ENCODE measurements at regions of chr11 and their contacts with region 1.

Region 1: DNA sequence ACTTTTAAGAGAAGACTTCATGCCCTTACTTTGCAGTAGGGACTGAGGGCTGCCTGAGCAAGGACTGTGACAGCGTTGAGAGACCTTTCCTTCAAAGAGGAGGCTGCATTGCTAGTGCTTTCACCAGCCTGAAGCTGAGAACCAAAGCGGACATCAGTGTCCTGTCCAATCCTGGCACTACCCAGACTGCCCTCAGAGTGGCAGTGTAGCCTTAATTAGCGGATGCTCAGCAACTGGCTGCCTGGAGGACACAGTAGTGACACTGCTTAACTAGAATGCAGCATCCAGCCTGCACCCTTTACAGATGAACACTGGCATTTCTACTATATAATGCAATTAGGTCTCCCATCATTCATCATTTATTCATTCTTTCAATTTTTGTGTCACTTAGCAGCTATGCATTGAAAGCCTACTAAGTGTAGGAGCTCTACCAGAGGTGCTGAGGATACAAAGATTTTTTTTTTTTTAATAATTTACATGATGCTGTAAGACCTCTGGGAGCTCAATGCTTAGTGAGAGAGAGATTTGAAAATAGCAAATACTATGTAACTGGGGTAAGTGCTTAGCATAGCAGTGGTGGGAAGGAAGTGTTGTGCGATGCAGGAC is 36.9 kb upstream of the SLC36A4 start:
- DNase-seq: peak; percentile 76
- ATAC-seq: peak; percentile 100
- H3K4me3 ChIP-seq: no peak overlapping the region
- H3K27ac ChIP-seq: no peak overlapping the region
- H3K4me1 ChIP-seq: no peaks in the 10 kb centered on the region
- H3K27me3 ChIP-seq: peaks cover 16% of the 10 kb centered on the region
- CTCF ChIP-seq: peak; percentile 97
- POLR2A ChIP-seq: no peak
- RAD21 ChIP-seq: peak; percentile 99

Region 2: DNA sequence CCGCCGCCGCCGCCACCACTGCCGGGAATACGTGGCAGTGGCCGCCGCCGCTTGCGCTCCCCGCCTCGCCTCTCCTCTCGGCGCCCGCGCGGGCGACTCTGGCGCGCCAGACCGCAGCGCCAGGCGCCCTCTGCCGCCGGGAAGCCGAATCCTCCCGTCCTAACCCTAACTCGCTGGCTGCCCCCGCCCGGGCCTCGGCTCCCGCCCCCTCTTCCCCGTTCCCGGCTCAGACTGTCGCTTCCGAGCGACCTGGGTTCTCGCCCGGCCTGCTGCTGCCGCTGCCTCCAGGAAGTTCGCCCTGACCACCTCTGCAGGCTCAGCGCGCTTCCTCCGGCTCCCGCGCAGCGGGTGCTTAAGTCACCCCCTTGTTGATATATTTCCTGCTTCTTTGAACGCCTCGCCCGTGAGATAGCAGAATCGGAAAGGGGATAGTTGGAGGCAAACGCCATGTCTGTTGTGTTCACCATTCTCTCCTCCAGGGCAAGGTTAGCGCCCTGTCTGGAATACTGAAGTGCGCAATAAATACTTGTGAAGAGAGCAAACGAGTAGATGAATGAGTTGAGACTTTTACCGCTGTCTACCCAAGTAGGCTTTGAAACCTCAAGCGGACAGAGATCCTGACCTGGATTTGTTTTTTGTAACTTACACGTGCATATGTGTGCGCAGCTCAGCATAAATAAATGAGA is 308.7 kb after region 1 on chr11 and contains the start of gene SMCO4:
- CTCF ChIA-PET with region 1: interaction called, 5 read pairs
- POLR2A ChIA-PET with region 1: no interaction called
- dilution Hi-C with region 1: no loop called
- in situ Hi-C with region 1: loop called (anchors 5 kb)
- intact Hi-C with region 1: loop called (anchors 1 kb)
- DNase-seq: peak; percentile 66
- ATAC-seq: peak; percentile 95
- H3K4me3 ChIP-seq: peak within 1 kb of the TSS; percentile 57
- H3K27ac ChIP-seq: no peak within 1 kb of the TSS; the same call in 1 of the 2 replicates
- H3K4me1 ChIP-seq: peaks cover 2% of the 10 kb centered on the region; the same call in 1 of the 2 replicates
- H3K27me3 ChIP-seq: peaks cover 17% of the 10 kb centered on the region
- CTCF ChIP-seq: peak; percentile 85
- POLR2A ChIP-seq: peak; percentile 45; the same call in 1 of the 2 replicates
- RAD21 ChIP-seq: peak; percentile 81
- total RNA-seq, gene SMCO4: 2.2 and 4.2 TPM in 2 replicates

Region 3: GRCh38 chr11:93652161-93652597 is 417.5 kb after region 1 on chr11:
- CTCF ChIA-PET with region 1: interaction called, 29 read pairs
- POLR2A ChIA-PET with region 1: no interaction called
- dilution Hi-C with region 1: no loop called
- in situ Hi-C with region 1: loop called (anchors 5 kb)
- intact Hi-C with region 1: loop called (anchors 1 kb)
- DNase-seq: peak; percentile 44
- ATAC-seq: peak; percentile 56; the same call in 1 of the 2 replicates
- H3K4me3 ChIP-seq: no peak overlapping the region
- H3K27ac ChIP-seq: no peak overlapping the region
- H3K4me1 ChIP-seq: no peaks in the 10 kb centered on the region
- H3K27me3 ChIP-seq: peaks cover 26% of the 10 kb centered on the region
- CTCF ChIP-seq: peak; percentile 76
- POLR2A ChIP-seq: no peak
- RAD21 ChIP-seq: peak; percentile 56

Region 4: GRCh38 chr11:94504689-94505293 is 1270.1 kb after region 1 on chr11:
- CTCF ChIA-PET with region 1: no interaction called
- POLR2A ChIA-PET with region 1: no interaction called
- dilution Hi-C with region 1: no loop called
- in situ Hi-C with region 1: no loop called
- intact Hi-C with region 1: loop called (anchors 5 kb)
- DNase-seq: peak; percentile 68
- ATAC-seq: peak; percentile 67
- H3K4me3 ChIP-seq: no peak overlapping the region
- H3K27ac ChIP-seq: no peak overlapping the region
- H3K4me1 ChIP-seq: no peaks in the 10 kb centered on the region
- H3K27me3 ChIP-seq: no peaks in the 10 kb centered on the region; the same call in 1 of the 2 replicates
- CTCF ChIP-seq: peak; percentile 75
- POLR2A ChIP-seq: no peak
- RAD21 ChIP-seq: peak; percentile 78